Posterior cingulate gyrus (tissue), 11 donors: ENCODE measurements at regions of chr6 and their contacts with region 1.

Region 1: GRCh38 chr6:149834513-149835481 is 29.4 kb downstream of the LRP11 start:
- DNase-seq: peak in 5 of 10 donors; percentile 28 to 70 (median 65)

Region 2: GRCh38 chr6:149723771-149724417 is 110.9 kb before region 1 on chr6:
- intact Hi-C with region 1: loop called (anchors 10 kb)
- DNase-seq: peak in 6 of 10 donors; percentile 24 to 90 (median 37)

Region 3: GRCh38 chr6:149863697-149864577 is 29.1 kb after region 1 on chr6 and contains the start of gene LRP11:
- intact Hi-C with region 1: loop called (anchors 1 kb)
- DNase-seq: peak; percentile 71 to 98 (median 88)

Region 4: GRCh38 chr6:149925974-149926777 is 91.4 kb after region 1 on chr6:
- intact Hi-C with region 1: loop called (anchors 1 kb)
- DNase-seq: peak; percentile 62 to 96 (median 78)

Region 5: GRCh38 chr6:150016324-150017185 is 181.8 kb after region 1 on chr6:
- intact Hi-C with region 1: loop called (anchors 5 kb)
- DNase-seq: peak in 7 of 10 donors; percentile 48 to 93 (median 62)